ENCODE measurements at regions of chr2 and their contacts with region 1.

Region 1: GRCh38 chr2:39124000-39124745 is 3.3 kb upstream of the SOS1 start:
- DNase-seq: peak; percentile 97
- H3K4me3 Mint-ChIP-seq: peak overlapping the region; percentile 80
- H3K27ac Mint-ChIP-seq: peak overlapping the region; percentile 95
- H3K4me1 Mint-ChIP-seq: peaks cover 42% of the 10 kb centered on the region
- H3K27me3 Mint-ChIP-seq: no peaks in the 10 kb centered on the region

Region 2: DNA sequence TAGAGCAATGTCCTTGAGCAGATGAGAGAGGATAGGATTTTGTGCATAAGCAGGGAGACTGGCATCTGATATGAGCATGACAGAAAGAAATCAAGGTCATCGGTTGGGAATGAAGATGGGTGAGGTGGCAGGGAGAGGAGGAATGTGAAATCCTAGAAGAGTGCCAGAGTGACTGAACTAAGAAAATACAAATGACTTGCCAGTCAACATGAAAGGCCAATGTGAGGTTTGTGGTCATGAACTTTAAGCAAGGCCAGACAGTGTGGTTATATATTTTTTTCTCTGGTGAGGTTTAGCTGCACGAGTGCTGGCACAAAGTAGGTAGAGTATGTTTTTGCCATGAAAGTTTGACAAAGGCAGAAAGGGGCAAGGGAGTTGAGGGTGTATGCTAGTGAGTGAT is 1758.5 kb before region 1 on chr2:
- CTCF ChIA-PET with region 1: no interaction called
- POLR2A ChIA-PET with region 1: no interaction called
- intact Hi-C with region 1: loop called (anchors 5 kb)
- DNase-seq: peak; percentile 22
- H3K4me3 Mint-ChIP-seq: no peak overlapping the region
- H3K27ac Mint-ChIP-seq: no peak overlapping the region
- H3K4me1 Mint-ChIP-seq: no peaks in the 10 kb centered on the region
- H3K27me3 Mint-ChIP-seq: peaks cover 31% of the 10 kb centered on the region

Region 3: DNA sequence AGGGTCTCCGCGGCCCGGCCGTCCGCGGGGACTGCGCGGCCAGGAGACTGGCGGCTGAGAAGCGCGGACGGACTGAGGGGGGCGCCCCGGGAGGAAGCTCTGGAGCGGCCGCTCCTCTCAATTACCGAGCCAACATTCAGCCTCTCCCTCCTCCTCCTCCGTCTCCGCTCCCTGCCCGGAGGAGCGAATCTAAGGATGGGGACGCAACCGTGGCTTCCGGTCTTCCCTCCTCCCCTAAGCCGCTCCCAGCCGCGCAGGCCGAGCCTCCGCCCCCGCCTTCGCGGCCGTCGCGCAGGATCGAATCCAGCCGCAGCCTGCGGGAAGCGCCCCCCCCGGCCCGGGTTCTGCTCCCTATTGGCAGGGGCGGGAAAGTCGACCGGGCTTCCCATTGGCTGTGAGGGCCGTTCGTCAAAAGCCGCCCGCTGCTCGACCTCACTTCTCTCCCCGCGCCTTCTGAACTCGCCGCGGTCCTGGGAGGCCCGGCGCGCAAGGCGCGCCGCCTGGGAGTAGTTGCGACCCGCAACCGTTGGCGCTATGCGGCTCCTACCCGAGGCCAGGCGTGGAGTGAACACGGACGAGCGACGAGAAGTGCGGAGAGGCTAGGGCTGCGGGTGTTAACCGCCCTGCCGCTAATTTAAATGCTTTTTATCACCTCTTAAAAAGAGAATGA is 521.3 kb before region 1 on chr2 and contains the start of gene HNRNPLL:
- CTCF ChIA-PET with region 1: no interaction called
- POLR2A ChIA-PET with region 1: no interaction called
- intact Hi-C with region 1: loop called (anchors 5 kb)
- DNase-seq: peak; percentile 98
- H3K4me3 Mint-ChIP-seq: peak within 1 kb of the TSS; percentile 92
- H3K27ac Mint-ChIP-seq: peak within 1 kb of the TSS; percentile 93
- H3K4me1 Mint-ChIP-seq: peaks cover 39% of the 10 kb centered on the region
- H3K27me3 Mint-ChIP-seq: no peaks in the 10 kb centered on the region
- total RNA-seq, gene HNRNPLL: 106 to 108 TPM

Region 4: DNA sequence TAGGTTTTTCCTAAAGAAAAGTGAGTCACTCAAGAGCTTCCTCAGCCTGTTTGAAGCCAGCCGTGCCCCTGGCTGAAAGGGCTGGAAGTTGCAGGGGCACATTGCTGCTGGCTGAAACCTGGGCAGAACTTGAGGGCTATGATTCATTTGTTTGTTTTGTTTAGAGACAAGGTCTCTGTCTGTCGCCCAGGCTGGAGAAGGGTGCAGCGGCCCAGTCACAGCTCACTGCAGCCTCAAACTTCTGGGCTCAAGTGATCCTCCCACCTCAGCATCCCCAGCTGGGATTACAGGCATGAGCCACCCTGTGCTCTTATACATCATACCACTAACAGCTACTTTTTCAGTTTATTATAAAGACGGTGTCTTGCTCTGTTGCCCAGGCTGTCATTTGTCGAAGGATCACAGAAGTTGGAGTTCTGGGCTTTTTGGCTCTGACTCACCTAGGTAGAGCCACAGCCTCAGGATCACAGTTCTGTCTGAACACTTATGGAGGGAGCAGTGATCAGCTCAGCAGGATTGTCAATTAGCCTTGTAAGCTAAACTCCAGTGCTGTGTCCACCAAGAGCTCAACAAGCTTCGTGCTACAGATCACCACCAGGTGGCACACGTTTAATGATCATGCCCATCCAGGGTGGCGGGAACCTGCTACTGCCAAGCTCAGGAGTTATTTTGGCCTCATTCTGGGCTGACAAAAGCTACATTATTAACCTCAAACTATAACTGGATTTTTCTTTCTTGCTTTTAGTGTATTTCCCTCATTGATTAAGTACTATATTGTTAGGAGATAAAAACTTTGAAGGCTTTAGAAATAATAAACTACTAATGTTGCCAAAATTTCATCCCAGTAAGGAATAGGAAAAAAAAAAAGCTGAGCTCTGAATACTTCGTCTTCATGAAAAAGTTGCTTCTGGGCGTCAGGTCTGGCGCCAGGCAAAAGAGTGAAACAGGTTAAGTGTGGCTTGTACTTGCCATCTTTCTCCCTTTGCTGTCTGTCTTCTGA is 176.6 kb before region 1 on chr2:
- CTCF ChIA-PET with region 1: interaction called, 3 read pairs
- POLR2A ChIA-PET with region 1: no interaction called
- intact Hi-C with region 1: loop called (anchors 5 kb)
- DNase-seq: peak; percentile 80
- H3K4me3 Mint-ChIP-seq: no peak overlapping the region
- H3K27ac Mint-ChIP-seq: no peak overlapping the region
- H3K4me1 Mint-ChIP-seq: no peaks in the 10 kb centered on the region
- H3K27me3 Mint-ChIP-seq: no peaks in the 10 kb centered on the region

Region 5: GRCh38 chr2:39099870-39100728 is 24.1 kb before region 1 on chr2:
- CTCF ChIA-PET with region 1: interaction called, 6 read pairs
- POLR2A ChIA-PET with region 1: interaction called, 5 read pairs
- intact Hi-C with region 1: loop called (anchors 1 kb)
- DNase-seq: peak; percentile 49
- H3K4me3 Mint-ChIP-seq: peak overlapping the region; percentile 13
- H3K27ac Mint-ChIP-seq: peak overlapping the region; percentile 86
- H3K4me1 Mint-ChIP-seq: peaks cover 56% of the 10 kb centered on the region
- H3K27me3 Mint-ChIP-seq: no peaks in the 10 kb centered on the region

Region 6: DNA sequence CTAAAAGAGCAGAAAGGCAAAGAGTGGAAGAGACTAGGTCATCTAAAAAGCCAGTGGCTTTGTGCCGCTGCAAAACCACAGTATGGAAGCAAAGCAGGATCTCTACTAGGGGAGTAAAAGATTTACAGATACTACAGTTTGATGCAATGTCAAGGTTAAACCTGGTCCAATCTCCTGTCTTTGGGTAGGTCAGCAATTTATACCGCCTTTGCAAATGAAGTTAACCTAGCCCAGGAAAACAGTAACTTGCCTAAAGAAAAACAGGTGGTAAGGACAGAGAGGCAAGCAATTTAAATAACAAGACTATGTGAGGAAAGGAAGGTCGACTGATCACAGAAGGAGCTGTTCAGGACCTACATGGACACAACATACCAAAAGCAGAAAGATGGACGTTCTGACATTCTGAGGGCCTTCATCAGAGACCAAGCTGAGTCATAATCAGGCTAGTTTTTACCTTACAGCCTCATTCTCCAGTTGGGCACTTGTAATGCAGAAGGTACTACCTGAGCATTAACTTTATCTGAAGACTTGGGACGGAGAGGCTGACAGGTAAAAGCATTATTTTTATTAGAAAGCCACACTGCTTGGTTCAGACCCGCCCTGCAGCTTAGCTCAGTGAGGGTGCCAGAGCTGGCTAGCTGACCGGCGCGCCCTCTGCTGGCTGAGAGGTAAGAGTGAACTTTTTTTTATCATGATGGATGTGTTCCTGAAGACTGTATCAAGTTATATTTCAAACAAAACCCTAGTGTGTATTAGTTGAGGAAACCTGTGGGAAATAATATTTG is 103.6 kb after region 1 on chr2:
- CTCF ChIA-PET with region 1: interaction called, 132 read pairs
- POLR2A ChIA-PET with region 1: interaction called, 11 read pairs
- intact Hi-C with region 1: loop called (anchors 1 kb)
- DNase-seq: peak; percentile 87
- H3K4me3 Mint-ChIP-seq: peak overlapping the region; percentile 56
- H3K27ac Mint-ChIP-seq: peak overlapping the region; percentile 59
- H3K4me1 Mint-ChIP-seq: peaks cover 36% of the 10 kb centered on the region
- H3K27me3 Mint-ChIP-seq: no peaks in the 10 kb centered on the region

Region 7: DNA sequence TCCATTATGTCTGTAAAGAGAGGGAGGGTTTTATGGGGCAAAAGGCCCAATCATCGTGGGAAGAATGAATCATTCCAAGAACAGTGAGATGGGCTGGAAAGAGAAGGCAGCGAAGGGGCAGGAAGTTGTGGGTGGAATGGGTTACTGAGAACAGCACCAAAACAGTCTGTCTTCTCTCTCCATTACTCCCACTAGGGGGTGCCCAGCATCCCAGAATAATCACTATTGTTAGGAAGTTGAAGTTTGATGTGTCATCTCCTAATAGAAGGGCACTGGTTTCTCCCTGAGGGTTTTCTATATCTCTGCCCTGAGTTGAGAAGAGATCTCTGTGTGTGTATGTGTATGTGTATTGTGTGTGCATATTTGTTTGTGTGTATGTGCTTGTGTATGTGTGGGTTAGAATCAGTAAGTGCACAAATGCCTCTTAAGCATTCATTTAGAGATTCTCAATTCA is 389.5 kb after region 1 on chr2:
- CTCF ChIA-PET with region 1: no interaction called
- POLR2A ChIA-PET with region 1: no interaction called
- intact Hi-C with region 1: loop called (anchors 2 kb)
- DNase-seq: peak; percentile 85
- H3K4me3 Mint-ChIP-seq: peak overlapping the region; percentile 0
- H3K27ac Mint-ChIP-seq: peak overlapping the region; percentile 70
- H3K4me1 Mint-ChIP-seq: peaks cover 31% of the 10 kb centered on the region
- H3K27me3 Mint-ChIP-seq: peaks cover 7% of the 10 kb centered on the region